GM12878 (cell line): ENCODE measurements at regions of chr18 and their contacts with region 1.

Region 1: GRCh38 chr18:36572135-36572856 is 256.5 kb downstream of the TPGS2 start:
- DNase-seq: peak; percentile 38
- ATAC-seq: peak; percentile 87
- H3K4me3 ChIP-seq: no peak overlapping the region
- H3K27ac ChIP-seq: no peak overlapping the region
- H3K4me1 ChIP-seq: no peaks in the 10 kb centered on the region
- H3K27me3 ChIP-seq: no peaks in the 10 kb centered on the region
- CTCF ChIP-seq: peak; percentile 55 to 74 (median 55)
- EP300 ChIP-seq: no peak
- POLR2A ChIP-seq: no peak
- RAD21 ChIP-seq: peak; percentile 76

Region 2: GRCh38 chr18:35775887-35776286 is 796.4 kb before region 1 on chr18:
- CTCF ChIA-PET with region 1: no interaction called
- POLR2A ChIA-PET with region 1: no interaction called
- RAD21 ChIA-PET with region 1: no interaction called
- SMC1A ChIA-PET with region 1: no interaction called
- in situ Hi-C with region 1: no loop called
- intact Hi-C with region 1: no loop called
- DNase-seq: no peak
- ATAC-seq: no peak
- H3K4me3 ChIP-seq: no peak overlapping the region
- H3K27ac ChIP-seq: no peak overlapping the region
- H3K4me1 ChIP-seq: no peaks in the 10 kb centered on the region
- H3K27me3 ChIP-seq: peaks cover 0 to 3% of the 10 kb centered on the region in 2 experiments; a peak in 2 of 4 replicates
- CTCF ChIP-seq: no peak
- EP300 ChIP-seq: no peak
- POLR2A ChIP-seq: no peak
- RAD21 ChIP-seq: no peak

Region 3: GRCh38 chr18:36296650-36297416 is 275.5 kb before region 1 on chr18:
- CTCF ChIA-PET with region 1: interaction called, 21 read pairs
- POLR2A ChIA-PET with region 1: interaction called, 3 read pairs
- RAD21 ChIA-PET with region 1: interaction called, 47 read pairs
- SMC1A ChIA-PET with region 1: interaction called, 24 read pairs
- in situ Hi-C with region 1: no loop called
- intact Hi-C with region 1: loop called (anchors 5 kb)
- DNase-seq: no peak
- ATAC-seq: peak; percentile 49
- H3K4me3 ChIP-seq: peak overlapping the region; percentile 69
- H3K27ac ChIP-seq: no peak overlapping the region
- H3K4me1 ChIP-seq: no peaks in the 10 kb centered on the region
- H3K27me3 ChIP-seq: peaks cover 0 to 4% of the 10 kb centered on the region in 2 experiments; a peak in 1 of 4 replicates
- CTCF ChIP-seq: peak; percentile 17 to 56 (median 34); a peak in 4 of 6 replicates
- EP300 ChIP-seq: no peak
- POLR2A ChIP-seq: no peak
- RAD21 ChIP-seq: peak; percentile 40; the same call in 1 of the 2 replicates

Region 4: DNA sequence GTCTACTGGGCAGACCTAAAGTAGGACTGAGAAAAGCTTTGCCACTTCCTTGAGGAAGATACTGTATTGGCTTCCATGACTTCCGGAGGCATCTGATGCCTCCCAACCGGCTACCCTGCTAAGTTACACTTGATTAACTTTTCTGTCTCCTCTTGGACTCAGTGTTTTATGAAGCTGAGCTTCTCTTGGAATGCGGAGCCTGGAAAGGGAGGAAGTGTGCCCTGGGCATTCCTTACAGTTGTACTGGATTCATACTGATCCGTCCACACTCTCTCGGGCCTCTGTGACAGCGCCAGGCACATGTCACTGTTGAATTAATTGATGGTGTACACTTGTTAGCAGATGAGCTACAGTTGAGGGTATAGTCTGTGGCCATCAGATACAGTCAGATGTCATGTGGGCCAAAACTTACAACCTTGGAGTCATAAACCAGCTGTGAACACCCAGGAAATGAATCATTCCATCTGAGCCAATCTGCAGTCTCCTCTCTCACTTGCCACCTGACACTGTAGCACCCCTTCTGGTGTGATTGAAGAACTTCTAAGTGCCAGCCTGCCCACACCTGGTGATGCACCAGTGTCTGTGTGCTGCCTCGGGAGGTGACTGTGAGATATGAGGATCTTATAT is 152.3 kb before region 1 on chr18:
- CTCF ChIA-PET with region 1: interaction called, 33 read pairs
- POLR2A ChIA-PET with region 1: no interaction called
- RAD21 ChIA-PET with region 1: interaction called, 23 read pairs
- SMC1A ChIA-PET with region 1: interaction called, 23 read pairs
- in situ Hi-C with region 1: no loop called
- intact Hi-C with region 1: no loop called
- DNase-seq: no peak
- ATAC-seq: peak; percentile 94
- H3K4me3 ChIP-seq: no peak overlapping the region
- H3K27ac ChIP-seq: no peak overlapping the region
- H3K4me1 ChIP-seq: no peaks in the 10 kb centered on the region
- H3K27me3 ChIP-seq: no peaks in the 10 kb centered on the region
- CTCF ChIP-seq: peak; percentile 19 to 47 (median 31); a peak in 5 of 6 replicates
- EP300 ChIP-seq: no peak
- POLR2A ChIP-seq: no peak
- RAD21 ChIP-seq: peak; percentile 22; the same call in 1 of the 2 replicates

Region 5: DNA sequence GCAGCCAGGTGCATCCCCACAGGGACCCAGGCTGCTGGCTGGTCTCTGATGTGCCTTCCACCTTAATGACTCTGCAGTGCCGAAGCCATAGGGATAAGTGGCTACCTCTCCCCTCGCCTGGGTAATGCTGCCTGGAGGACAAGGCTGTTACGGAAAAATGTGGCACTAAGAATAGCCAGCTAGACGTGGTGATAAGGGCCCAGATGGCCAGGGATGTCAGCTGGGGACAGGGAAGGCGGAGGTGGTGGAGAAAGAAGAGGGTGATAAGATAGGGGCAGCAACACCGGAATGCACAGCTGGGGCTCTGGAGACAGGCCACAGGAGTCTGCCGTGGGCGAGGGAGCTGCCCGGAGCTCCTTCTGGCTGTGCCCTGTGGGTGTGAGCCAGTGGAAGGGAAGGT is 104.1 kb before region 1 on chr18:
- CTCF ChIA-PET with region 1: interaction called, 5 read pairs
- POLR2A ChIA-PET with region 1: no interaction called
- RAD21 ChIA-PET with region 1: interaction called, 9 read pairs
- SMC1A ChIA-PET with region 1: interaction called, 4 read pairs
- in situ Hi-C with region 1: no loop called
- intact Hi-C with region 1: loop called (anchors 5 kb)
- DNase-seq: no peak
- ATAC-seq: no peak
- H3K4me3 ChIP-seq: no peak overlapping the region
- H3K27ac ChIP-seq: no peak overlapping the region
- H3K4me1 ChIP-seq: peaks cover 3% of the 10 kb centered on the region; the same call in 1 of the 2 replicates
- H3K27me3 ChIP-seq: no peaks in the 10 kb centered on the region
- CTCF ChIP-seq: no peak
- EP300 ChIP-seq: no peak
- POLR2A ChIP-seq: no peak
- RAD21 ChIP-seq: no peak

Region 6: DNA sequence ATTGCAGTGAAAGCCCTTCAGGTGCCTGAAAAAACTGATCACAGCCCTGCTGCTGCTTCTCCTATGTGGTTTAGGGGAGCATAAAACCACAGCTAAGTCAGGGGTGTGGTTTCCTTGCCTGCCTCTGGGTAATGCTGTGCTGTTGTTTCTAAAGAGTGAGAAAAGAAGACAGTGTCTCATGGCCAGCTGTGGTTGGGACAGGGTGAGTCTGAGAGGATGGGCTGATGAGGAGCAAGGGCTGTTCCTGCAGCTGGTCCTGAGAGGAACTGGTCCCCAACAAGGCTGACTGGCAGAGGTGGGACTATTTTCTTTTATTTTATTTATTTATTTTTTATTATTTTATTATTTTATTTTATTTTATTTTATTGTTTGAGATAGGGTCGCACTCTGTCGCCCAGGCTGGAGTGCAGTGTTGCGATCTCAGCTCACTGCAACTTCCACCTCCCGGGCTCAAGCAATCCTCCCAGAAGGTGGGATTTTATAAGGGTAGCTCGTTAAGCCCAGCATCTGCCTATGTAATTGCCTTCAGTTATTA is 38.1 kb before region 1 on chr18:
- CTCF ChIA-PET with region 1: interaction called, 17 read pairs
- POLR2A ChIA-PET with region 1: interaction called, 3 read pairs
- RAD21 ChIA-PET with region 1: interaction called, 8 read pairs
- SMC1A ChIA-PET with region 1: interaction called, 6 read pairs
- in situ Hi-C with region 1: no loop called
- intact Hi-C with region 1: no loop called
- DNase-seq: no peak
- ATAC-seq: peak; percentile 75
- H3K4me3 ChIP-seq: no peak overlapping the region
- H3K27ac ChIP-seq: no peak overlapping the region
- H3K4me1 ChIP-seq: no peaks in the 10 kb centered on the region
- H3K27me3 ChIP-seq: no peaks in the 10 kb centered on the region
- CTCF ChIP-seq: no peak
- EP300 ChIP-seq: no peak
- POLR2A ChIP-seq: no peak
- RAD21 ChIP-seq: no peak

Region 7: DNA sequence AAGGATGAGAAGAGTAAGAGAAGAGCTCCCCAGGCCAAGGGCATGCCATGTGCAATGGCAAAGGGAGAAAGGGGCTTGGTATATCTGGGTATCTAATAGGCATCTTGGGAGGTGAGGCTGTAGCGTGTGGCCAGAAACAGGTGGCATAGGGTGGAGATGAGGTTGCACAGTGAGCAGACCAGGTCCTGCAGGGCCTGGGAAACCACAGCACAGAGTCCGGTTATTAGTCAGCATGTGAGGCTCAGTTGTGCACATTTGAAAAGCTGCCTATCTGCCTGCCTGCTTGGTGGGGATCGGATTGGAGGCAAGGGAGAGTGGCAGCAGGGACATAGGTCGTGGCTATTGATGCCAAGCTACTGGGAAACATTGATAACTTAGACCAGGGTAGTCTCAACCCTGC is 65.9 kb after region 1 on chr18:
- CTCF ChIA-PET with region 1: interaction called, 3 read pairs
- POLR2A ChIA-PET with region 1: no interaction called
- RAD21 ChIA-PET with region 1: interaction called, 5 read pairs
- SMC1A ChIA-PET with region 1: interaction called, 11 read pairs
- in situ Hi-C with region 1: no loop called
- intact Hi-C with region 1: loop called (anchors 5 kb)
- DNase-seq: peak; percentile 92
- ATAC-seq: peak; percentile 88
- H3K4me3 ChIP-seq: no peak overlapping the region
- H3K27ac ChIP-seq: peak overlapping the region; percentile 94
- H3K4me1 ChIP-seq: peaks cover 58% of the 10 kb centered on the region
- H3K27me3 ChIP-seq: no peaks in the 10 kb centered on the region
- CTCF ChIP-seq: no peak
- EP300 ChIP-seq: peak in 1 of 2 experiments; percentile 83; a peak in 2 of 4 replicates
- POLR2A ChIP-seq: no peak
- RAD21 ChIP-seq: no peak

Region 8: DNA sequence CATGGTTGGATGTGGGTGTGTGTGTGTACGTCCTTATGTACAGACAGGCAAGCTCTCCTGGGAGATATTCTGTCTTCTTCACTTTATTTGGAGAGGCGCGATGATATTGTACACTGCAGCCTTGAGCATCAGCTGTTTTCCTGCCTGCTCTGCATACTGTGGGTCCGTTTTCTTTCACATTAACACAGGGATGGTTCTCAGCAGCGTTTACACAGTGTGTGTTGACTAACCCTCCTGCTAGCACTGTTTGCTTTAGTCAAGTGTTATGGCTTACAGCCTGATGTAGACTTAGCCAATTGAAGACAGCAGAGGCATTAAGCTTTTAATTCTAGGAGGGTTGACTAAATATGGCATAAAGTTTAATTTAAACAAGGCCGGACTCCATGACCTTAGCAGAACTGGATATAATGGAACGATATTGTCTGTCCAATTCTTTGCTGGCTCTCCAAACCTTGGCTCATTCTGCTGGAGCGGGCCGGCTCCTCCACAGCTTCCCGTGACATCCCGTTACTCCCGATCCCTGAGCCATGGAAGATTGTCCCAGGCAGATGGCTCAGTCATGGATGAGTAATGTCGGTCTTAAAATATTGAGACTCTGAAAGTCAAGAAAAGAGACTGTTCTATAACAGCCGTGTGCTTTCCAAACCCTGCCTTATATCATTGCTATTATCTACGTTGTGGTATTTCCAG is 121.8 kb after region 1 on chr18:
- CTCF ChIA-PET with region 1: no interaction called
- POLR2A ChIA-PET with region 1: no interaction called
- RAD21 ChIA-PET with region 1: no interaction called
- SMC1A ChIA-PET with region 1: no interaction called
- in situ Hi-C with region 1: no loop called
- intact Hi-C with region 1: no loop called
- DNase-seq: no peak
- ATAC-seq: no peak
- H3K4me3 ChIP-seq: no peak overlapping the region
- H3K27ac ChIP-seq: no peak overlapping the region
- H3K4me1 ChIP-seq: no peaks in the 10 kb centered on the region
- H3K27me3 ChIP-seq: no peaks in the 10 kb centered on the region
- CTCF ChIP-seq: no peak
- EP300 ChIP-seq: no peak
- POLR2A ChIP-seq: no peak
- RAD21 ChIP-seq: no peak

Region 9: DNA sequence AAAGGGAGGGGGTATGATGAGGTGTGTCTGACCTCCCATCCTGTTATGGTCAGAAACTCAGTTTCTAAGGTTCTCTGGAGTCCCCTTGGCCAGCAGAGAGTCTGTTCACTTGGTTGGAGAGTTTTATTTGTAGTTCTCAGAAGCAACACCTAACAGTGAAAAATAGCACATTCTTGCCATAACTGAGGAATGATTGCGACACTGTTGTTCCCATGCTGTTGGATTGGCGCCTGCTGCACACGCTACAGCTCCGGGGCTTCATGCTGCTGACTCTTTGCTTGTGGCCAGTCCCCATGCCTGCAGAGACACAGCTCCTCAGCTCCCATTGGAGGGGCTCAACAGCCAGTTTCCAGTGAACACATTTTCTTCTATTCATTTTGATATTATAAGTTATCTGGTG is 214.4 kb after region 1 on chr18:
- CTCF ChIA-PET with region 1: no interaction called
- POLR2A ChIA-PET with region 1: no interaction called
- RAD21 ChIA-PET with region 1: no interaction called
- SMC1A ChIA-PET with region 1: no interaction called
- in situ Hi-C with region 1: no loop called
- intact Hi-C with region 1: no loop called
- DNase-seq: no peak
- ATAC-seq: no peak
- H3K4me3 ChIP-seq: no peak overlapping the region
- H3K27ac ChIP-seq: no peak overlapping the region
- H3K4me1 ChIP-seq: no peaks in the 10 kb centered on the region
- H3K27me3 ChIP-seq: no peaks in the 10 kb centered on the region
- CTCF ChIP-seq: no peak
- EP300 ChIP-seq: no peak
- POLR2A ChIP-seq: no peak
- RAD21 ChIP-seq: no peak